Activated CD4-positive, alpha-beta T cell treated with anti-CD3 and anti-CD28 coated beads for 36 hours (primary cell): ENCODE measurements at regions of chr11 and their contacts with region 1.

Region 1: GRCh38 chr11:99200720-99201119 is 180.0 kb downstream of the CNTN5 start:
- DNase-seq: no peak
- ATAC-seq: no peak
- H3K4me3 Mint-ChIP-seq: no peak overlapping the region
- H3K27ac Mint-ChIP-seq: no peak overlapping the region
- H3K4me1 Mint-ChIP-seq: no peaks in the 10 kb centered on the region
- H3K27me3 Mint-ChIP-seq: no peaks in the 10 kb centered on the region

Region 2: DNA sequence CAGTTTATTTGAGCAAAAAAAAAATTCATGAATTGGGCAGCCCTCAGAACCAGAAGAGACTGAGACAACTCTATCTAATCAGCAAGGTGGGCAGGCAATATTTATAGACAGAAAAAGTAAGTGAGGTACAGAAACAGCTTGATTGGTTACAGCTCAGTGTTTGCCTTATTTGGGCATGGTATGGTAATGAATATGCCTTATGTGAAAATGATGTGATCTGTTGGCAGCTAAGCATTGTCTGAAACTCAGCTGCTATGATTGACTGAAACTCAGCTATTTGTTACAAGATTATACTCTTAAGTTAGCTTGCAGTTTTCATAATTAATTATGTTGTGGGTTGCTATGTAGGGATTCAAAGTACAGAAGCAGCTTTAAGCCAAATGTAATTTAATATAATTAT is 52.4 kb before region 1 on chr11:
- CTCF ChIA-PET with region 1: no interaction called
- POLR2A ChIA-PET with region 1: no interaction called
- intact Hi-C with region 1: loop called in 1 of 2 experiments (anchors 10 kb)
- DNase-seq: no peak
- ATAC-seq: no peak
- H3K4me3 Mint-ChIP-seq: no peak overlapping the region
- H3K27ac Mint-ChIP-seq: no peak overlapping the region
- H3K4me1 Mint-ChIP-seq: no peaks in the 10 kb centered on the region
- H3K27me3 Mint-ChIP-seq: no peaks in the 10 kb centered on the region

Region 3: DNA sequence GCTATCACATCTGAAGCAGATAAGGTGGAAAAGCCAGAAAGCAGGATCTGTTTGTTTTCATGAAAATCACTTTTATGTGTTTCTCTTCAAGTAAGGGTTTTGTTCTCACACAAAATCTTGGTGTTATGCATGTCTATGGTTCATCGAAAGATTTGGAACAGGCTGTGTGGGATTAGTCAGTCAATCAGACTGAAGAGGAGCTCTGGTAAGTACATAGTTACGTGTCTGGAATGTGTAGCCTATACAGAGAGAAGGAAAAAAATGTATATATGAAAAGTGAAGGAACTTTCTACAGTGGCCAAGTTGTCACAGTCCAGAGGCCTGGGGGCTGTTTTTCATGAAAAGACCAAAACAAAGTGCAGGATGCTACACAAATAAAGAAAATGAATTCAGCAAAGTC is 23.3 kb before region 1 on chr11:
- CTCF ChIA-PET with region 1: no interaction called
- POLR2A ChIA-PET with region 1: no interaction called
- intact Hi-C with region 1: no loop called
- DNase-seq: no peak
- ATAC-seq: no peak
- H3K4me3 Mint-ChIP-seq: no peak overlapping the region
- H3K27ac Mint-ChIP-seq: no peak overlapping the region
- H3K4me1 Mint-ChIP-seq: no peaks in the 10 kb centered on the region
- H3K27me3 Mint-ChIP-seq: no peaks in the 10 kb centered on the region